Activated T-helper 2 cell treated with anti-CD3 and anti-CD28 coated beads, Interferon-gamma antibody, Interleukin-2, Interleukin-4, amounts not matched to agents 10 μg/mL and 5 μg/mL and 100 μg/mL, durations not matched to agents 14 hours and 24 hours and 36 hours (primary cell): ENCODE measurements at regions of chr4 and their contacts with region 1.

Region 1: GRCh38 chr4:38939165-38939564 is 71.6 kb downstream of the FAM114A1 start:
- DNase-seq: no peak
- H3K4me3 Mint-ChIP-seq: peak overlapping the region; percentile 5
- H3K27ac Mint-ChIP-seq: peak overlapping the region; percentile 71
- H3K4me1 Mint-ChIP-seq: peaks cover 44% of the 10 kb centered on the region
- H3K27me3 Mint-ChIP-seq: no peaks in the 10 kb centered on the region

Region 2: GRCh38 chr4:38902695-38903094 is 36.5 kb before region 1 on chr4:
- intact Hi-C with region 1: loop called (anchors 5 kb)
- DNase-seq: no peak
- H3K4me3 Mint-ChIP-seq: no peak overlapping the region
- H3K27ac Mint-ChIP-seq: no peak overlapping the region
- H3K4me1 Mint-ChIP-seq: no peaks in the 10 kb centered on the region
- H3K27me3 Mint-ChIP-seq: no peaks in the 10 kb centered on the region

Region 3: GRCh38 chr4:38949411-38950051 is 10.4 kb after region 1 on chr4:
- intact Hi-C with region 1: loop called (anchors 1 kb)
- DNase-seq: peak; percentile 36
- H3K4me3 Mint-ChIP-seq: no peak overlapping the region
- H3K27ac Mint-ChIP-seq: peak overlapping the region; percentile 89
- H3K4me1 Mint-ChIP-seq: peaks cover 48% of the 10 kb centered on the region
- H3K27me3 Mint-ChIP-seq: no peaks in the 10 kb centered on the region

Region 4: DNA sequence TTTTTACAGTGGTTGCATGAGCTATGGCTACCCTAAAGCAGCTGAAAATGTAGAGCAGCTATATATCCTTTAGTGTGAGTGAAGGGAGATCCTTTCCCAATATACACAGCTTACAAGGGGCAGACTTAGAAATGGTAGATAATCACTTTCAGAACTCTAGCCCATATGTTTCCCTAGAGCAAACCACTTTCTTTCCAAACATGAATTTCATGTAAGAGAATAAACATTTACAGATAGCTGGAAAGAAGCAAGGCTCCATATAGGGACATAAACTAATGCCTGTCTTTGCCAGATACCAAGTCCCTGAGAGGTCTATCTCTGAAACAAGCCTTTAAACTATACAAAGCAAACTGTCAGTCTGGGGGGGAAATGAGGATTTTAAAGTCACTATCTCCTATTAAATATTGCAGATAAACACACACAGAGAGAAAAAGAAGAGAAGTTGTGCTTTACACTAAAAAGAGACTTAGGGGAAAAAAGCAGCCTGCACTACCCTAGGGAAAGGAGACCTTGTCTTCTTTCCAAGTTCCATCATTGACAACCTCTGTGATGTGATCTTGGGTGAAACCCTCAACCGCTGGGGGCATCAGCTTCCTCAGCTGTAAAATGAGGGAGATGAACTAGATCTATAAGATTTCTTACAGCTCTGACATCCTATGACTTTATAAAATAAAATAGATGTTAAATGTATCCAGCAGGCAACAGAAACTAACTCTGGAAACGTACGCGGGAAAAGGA is 19.5 kb after region 1 on chr4:
- intact Hi-C with region 1: loop called (anchors 1 kb)
- DNase-seq: no peak
- H3K4me3 Mint-ChIP-seq: no peak overlapping the region
- H3K27ac Mint-ChIP-seq: peak overlapping the region; percentile 94
- H3K4me1 Mint-ChIP-seq: peaks cover 35% of the 10 kb centered on the region
- H3K27me3 Mint-ChIP-seq: no peaks in the 10 kb centered on the region

Region 5: DNA sequence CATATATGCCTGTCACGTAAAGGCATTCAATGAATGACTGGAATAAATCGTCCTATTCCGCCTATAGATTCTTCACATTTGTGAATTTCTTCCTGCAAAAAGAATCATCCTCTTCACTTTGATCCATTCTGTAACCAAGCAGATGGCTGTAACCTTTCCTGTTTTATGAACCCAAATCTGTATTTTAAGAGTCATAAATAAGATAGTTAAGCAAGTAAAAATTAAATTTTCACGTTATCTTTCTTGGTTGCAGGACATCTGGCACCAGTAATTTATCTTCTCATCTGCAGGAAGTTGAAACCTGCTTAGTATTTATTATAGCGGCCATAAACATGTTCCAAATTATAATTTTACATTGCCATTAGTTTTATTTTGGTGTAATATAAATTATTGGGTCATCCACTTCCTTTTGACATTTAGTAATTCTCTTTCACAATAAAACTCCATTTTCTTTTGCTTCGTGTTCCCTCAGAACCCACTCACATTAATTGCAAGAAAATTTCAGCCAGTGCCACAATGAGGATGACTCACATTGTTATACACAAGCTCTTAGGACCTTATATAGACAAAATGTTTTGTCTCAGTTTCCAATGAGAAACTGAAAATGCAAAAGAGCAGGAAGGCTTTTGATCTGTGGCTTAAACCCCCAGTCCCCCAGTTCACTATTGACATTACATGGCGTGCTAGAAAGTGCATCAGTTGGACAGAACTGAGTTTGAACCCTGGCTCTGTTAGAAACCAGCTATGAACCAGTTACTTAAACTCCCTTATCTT is 41.9 kb after region 1 on chr4:
- intact Hi-C with region 1: loop called (anchors 1 kb)
- DNase-seq: no peak
- H3K4me3 Mint-ChIP-seq: peak overlapping the region; percentile 31
- H3K27ac Mint-ChIP-seq: peak overlapping the region; percentile 81
- H3K4me1 Mint-ChIP-seq: peaks cover 53% of the 10 kb centered on the region
- H3K27me3 Mint-ChIP-seq: no peaks in the 10 kb centered on the region

Region 6: GRCh38 chr4:39032218-39033085 is 93.3 kb after region 1 on chr4 and contains the start of gene TMEM156:
- intact Hi-C with region 1: loop called (anchors 5 kb)
- DNase-seq: no peak
- H3K4me3 Mint-ChIP-seq: peak within 1 kb of the TSS; percentile 86
- H3K27ac Mint-ChIP-seq: peak within 1 kb of the TSS; percentile 80
- H3K4me1 Mint-ChIP-seq: peaks cover 45% of the 10 kb centered on the region
- H3K27me3 Mint-ChIP-seq: no peaks in the 10 kb centered on the region
- total RNA-seq, gene TMEM156: 17.6 and 17.8 TPM in 2 replicates